ENCODE measurements at regions of chr10 and their contacts with region 1.

Region 1: DNA sequence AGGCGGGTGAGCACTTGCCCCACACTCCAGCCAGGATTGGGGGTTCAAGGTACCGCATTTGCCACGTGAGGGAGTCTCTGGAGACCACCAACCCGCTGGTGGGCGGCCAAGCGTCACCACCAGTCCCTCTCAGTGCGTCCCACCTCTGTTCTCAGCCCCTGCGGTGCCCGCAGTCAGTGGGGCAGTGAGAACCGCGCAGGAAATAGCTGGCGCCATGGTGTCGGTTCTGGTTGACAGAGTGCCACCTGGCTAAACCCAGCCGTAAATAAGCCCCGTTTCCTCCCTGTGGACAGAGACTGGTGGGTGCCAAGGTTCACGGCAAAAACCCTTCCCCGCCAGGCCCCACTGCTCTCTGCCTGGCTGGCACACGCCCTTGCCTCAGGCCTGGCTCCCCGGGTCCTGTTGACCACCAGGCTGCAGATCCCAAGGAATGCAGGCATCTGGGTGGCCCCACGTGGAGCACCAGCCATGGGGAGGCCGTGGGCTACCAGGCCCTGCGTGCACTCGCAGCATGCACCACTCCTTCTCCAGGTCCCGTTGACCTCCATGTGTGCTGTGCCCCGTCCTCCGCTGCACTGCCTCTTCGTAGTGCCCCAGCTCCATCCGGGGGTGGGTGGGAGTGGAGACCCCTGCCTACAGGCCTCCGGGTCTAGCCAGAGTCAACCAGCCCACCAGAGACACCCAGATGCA is 140.0 kb downstream of the LHPP start:
- DNase-seq: peak; percentile 96
- ATAC-seq: peak; percentile 85
- H3K4me3 ChIP-seq: peak overlapping the region in 2 of 5 experiments; percentile 5 to 18
- H3K4me3 Mint-ChIP-seq: peak overlapping the region; percentile 52
- H3K27ac ChIP-seq: peak overlapping the region; percentile 90 to 99
- H3K27ac Mint-ChIP-seq: peak overlapping the region; percentile 99
- H3K4me1 ChIP-seq: peaks cover 98 to 100% of the 10 kb centered on the region in 2 donors
- H3K4me1 Mint-ChIP-seq: peaks cover 94% of the 10 kb centered on the region
- H3K27me3 ChIP-seq: no peaks in the 10 kb centered on the region
- H3K27me3 Mint-ChIP-seq: no peaks in the 10 kb centered on the region
- CTCF ChIP-seq: no peak

Region 2: DNA sequence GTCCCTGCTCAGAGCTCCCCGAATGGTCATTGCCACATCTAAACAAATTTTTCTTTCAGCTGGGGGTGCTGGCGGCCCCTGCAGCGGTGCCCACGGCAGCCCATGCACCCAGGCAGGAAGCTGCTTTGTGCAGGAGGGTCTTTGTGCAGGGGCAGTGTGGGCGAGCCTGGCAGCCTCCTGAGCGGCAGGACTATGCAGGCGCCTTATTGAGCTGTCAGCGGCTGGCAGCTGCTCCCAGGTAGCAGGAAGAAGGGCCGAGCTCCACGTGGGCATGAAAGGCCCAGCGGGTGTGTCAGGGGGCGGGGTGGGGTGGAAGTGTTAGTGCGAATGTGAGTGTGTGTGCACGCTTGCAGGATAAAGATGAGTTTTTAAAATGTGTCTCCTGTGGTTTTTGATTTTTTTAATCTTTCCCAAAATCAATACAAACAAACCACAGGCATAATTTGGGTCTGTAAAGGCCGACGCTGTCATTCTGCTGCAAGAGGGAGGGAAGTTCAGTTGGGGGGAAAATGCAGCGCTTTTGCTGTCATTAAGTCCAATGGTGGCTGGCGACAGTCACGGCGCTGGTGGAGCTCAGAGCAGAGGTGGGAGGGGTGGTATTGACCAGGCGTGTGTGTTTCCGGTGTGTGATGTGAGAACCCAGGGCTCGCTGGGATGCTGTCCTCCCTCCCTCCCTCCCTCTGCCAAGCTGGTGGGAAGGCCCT is 56.1 kb before region 1 on chr10:
- CTCF ChIA-PET with region 1: interaction called, 74 read pairs
- POLR2A ChIA-PET with region 1: interaction called, 21 read pairs
- intact Hi-C with region 1: loop called (anchors 1 kb)
- DNase-seq: no peak
- ATAC-seq: no peak
- H3K4me3 ChIP-seq: peak overlapping the region in 4 of 5 experiments; percentile 13 to 34 (median 22)
- H3K4me3 Mint-ChIP-seq: peak overlapping the region; percentile 78
- H3K27ac ChIP-seq: peak overlapping the region; percentile 64 to 70
- H3K27ac Mint-ChIP-seq: peak overlapping the region; percentile 91
- H3K4me1 ChIP-seq: peaks cover 98 to 100% of the 10 kb centered on the region in 2 donors
- H3K4me1 Mint-ChIP-seq: peaks cover 91% of the 10 kb centered on the region
- H3K27me3 ChIP-seq: no peaks in the 10 kb centered on the region
- H3K27me3 Mint-ChIP-seq: no peaks in the 10 kb centered on the region
- CTCF ChIP-seq: no peak

Region 3: DNA sequence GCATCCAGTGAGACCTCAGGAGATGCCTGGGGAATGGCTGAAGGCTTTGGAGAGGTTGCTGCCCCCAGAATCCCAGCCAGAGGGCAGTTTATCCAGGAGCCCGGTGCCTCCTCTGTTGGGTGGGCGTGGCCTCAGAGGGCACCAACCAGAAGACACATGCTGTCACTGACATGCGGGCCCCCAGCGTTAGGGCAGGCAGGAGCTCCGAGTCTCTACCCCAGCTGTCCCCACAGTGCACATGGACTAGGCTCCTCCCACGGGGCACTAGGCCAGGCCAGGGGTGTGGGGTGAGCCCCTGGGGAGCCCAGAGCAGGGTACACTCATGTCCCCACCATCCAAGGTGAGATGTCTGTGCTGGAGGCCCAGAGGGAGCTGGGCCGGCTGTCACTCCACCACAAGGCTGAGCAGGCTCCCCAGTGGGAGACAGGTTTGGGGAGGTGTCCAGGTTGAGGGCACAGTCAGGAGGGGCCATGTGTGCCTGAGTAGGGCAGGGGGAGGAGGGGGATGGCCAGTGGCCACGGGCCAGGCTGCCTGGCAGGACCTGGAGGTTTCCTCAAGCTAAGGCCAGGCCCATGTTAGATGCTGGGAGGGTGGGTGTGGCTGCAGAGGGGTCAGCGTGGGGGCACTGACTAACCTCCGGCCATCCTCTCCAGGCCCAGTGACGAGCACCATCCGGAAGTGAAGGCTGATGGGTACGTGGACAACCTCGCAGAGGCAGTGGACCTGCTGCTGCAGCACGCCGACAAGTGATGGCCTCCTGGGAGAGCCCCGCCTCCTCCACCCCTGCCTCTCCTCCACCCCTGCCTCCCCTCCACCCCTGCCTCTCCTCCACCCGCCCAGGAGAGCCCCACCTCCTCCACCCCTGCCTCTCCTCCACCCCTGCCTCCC is 11.3 kb after region 1 on chr10:
- CTCF ChIA-PET with region 1: interaction called, 26 read pairs
- POLR2A ChIA-PET with region 1: interaction called, 163 read pairs
- intact Hi-C with region 1: loop called (anchors 1 kb)
- DNase-seq: peak; percentile 70
- ATAC-seq: peak; percentile 63
- H3K4me3 ChIP-seq: no peak overlapping the region
- H3K4me3 Mint-ChIP-seq: peak overlapping the region; percentile 57
- H3K27ac ChIP-seq: peak overlapping the region; percentile 86 to 97
- H3K27ac Mint-ChIP-seq: peak overlapping the region; percentile 90
- H3K4me1 ChIP-seq: peaks cover 79 to 96% of the 10 kb centered on the region in 2 donors
- H3K4me1 Mint-ChIP-seq: peaks cover 77% of the 10 kb centered on the region
- H3K27me3 ChIP-seq: no peaks in the 10 kb centered on the region
- H3K27me3 Mint-ChIP-seq: no peaks in the 10 kb centered on the region
- CTCF ChIP-seq: no peak

Region 4: DNA sequence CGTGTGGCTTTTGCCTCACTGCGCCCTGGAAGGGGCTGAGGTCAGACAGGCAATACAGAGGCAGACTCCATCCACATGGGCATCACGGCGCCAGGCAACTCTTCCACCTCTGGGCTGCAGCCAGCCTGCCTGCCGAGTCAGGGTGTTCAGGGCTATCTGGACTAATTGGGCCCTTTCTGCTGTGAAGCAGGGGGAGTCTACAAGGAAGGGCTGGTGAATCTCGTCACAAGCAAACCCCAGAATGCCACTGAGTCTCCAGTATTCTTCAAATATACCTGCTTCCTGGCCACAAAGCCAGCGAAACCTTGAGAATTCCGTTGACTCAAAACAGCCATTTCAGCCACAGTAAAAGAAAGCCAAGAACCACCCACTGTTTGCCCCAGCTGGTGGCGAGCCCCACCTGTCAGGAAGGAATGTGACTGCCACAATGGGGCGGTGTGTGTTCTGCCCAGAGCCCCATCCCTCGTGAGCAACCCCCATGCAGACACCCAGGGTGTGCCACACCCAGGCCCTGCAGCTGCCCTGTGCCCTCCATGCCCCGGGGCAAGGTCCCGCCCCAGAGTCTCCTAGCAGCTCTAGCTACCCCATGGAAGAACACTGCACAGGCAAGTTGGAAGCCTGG is 25.3 kb after region 1 on chr10:
- CTCF ChIA-PET with region 1: interaction called, 37 read pairs
- POLR2A ChIA-PET with region 1: interaction called, 163 read pairs
- intact Hi-C with region 1: no loop called
- DNase-seq: peak; percentile 82
- ATAC-seq: peak; percentile 81
- H3K4me3 ChIP-seq: peak overlapping the region in 1 of 5 experiments; percentile 30
- H3K4me3 Mint-ChIP-seq: peak overlapping the region; percentile 62
- H3K27ac ChIP-seq: peak overlapping the region; percentile 83 to 97
- H3K27ac Mint-ChIP-seq: peak overlapping the region; percentile 99
- H3K4me1 ChIP-seq: peaks cover 100% of the 10 kb centered on the region in 2 donors
- H3K4me1 Mint-ChIP-seq: peaks cover 94% of the 10 kb centered on the region
- H3K27me3 ChIP-seq: no peaks in the 10 kb centered on the region
- H3K27me3 Mint-ChIP-seq: no peaks in the 10 kb centered on the region
- CTCF ChIP-seq: peak; percentile 16

Region 5: GRCh38 chr10:124641282-124642087 is 39.9 kb after region 1 on chr10:
- CTCF ChIA-PET with region 1: interaction called, 4 read pairs
- POLR2A ChIA-PET with region 1: interaction called, 10 read pairs
- intact Hi-C with region 1: loop called (anchors 1 kb)
- DNase-seq: peak; percentile 81
- ATAC-seq: peak; percentile 76
- H3K4me3 ChIP-seq: peak overlapping the region in 4 of 5 experiments; percentile 18 to 37 (median 20)
- H3K4me3 Mint-ChIP-seq: peak overlapping the region; percentile 83
- H3K27ac ChIP-seq: peak overlapping the region; percentile 86 to 92
- H3K27ac Mint-ChIP-seq: peak overlapping the region; percentile 94
- H3K4me1 ChIP-seq: peaks cover 99 to 100% of the 10 kb centered on the region in 2 donors
- H3K4me1 Mint-ChIP-seq: peaks cover 99% of the 10 kb centered on the region
- H3K27me3 ChIP-seq: no peaks in the 10 kb centered on the region
- H3K27me3 Mint-ChIP-seq: no peaks in the 10 kb centered on the region
- CTCF ChIP-seq: no peak

Region 6: DNA sequence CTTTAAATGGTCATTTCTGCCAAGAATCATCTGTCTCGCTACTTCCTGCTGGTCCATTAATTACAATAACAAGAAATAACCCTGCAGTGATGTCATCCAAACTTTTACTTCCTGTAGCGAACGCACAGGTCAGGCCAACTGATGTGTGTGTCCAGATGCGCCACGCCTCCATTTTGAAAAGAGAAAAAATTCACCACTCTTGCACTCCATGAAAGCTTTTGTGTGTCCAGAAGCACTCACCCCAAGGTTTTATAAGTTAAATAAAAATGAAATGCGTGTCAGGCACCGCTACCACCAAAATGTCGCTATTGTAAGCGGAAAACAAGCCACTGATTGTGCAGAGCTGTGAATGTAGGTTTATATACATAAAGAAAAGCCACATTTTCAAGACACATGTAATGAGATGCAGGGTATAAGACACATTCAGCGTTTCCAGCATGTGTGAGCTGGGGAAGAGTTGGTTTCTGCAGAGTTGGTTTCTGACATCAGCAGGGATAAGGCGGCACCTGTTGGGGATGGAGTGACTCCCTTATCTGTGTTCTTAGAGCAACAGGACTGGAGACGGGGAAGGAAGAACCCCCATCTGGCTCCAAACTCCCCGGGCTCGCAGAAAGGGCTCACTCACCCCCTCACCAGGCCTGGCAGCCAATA is 475.4 kb after region 1 on chr10:
- CTCF ChIA-PET with region 1: no interaction called
- POLR2A ChIA-PET with region 1: no interaction called
- intact Hi-C with region 1: no loop called
- DNase-seq: no peak
- ATAC-seq: no peak
- H3K4me3 ChIP-seq: no peak overlapping the region
- H3K4me3 Mint-ChIP-seq: no peak overlapping the region
- H3K27ac ChIP-seq: no peak overlapping the region
- H3K27ac Mint-ChIP-seq: no peak overlapping the region
- H3K4me1 ChIP-seq: no peaks in the 10 kb centered on the region
- H3K4me1 Mint-ChIP-seq: no peaks in the 10 kb centered on the region
- H3K27me3 ChIP-seq: peaks cover 0 to 57% (median 22%) of the 10 kb centered on the region in 4 experiments
- H3K27me3 Mint-ChIP-seq: peaks cover 66% of the 10 kb centered on the region
- CTCF ChIP-seq: no peak